Activated B cell treated with CpG ODN at 0.5 μM for 24 hours (primary cell): ENCODE measurements at regions of chr10 and their contacts with region 1.

Region 1: DNA sequence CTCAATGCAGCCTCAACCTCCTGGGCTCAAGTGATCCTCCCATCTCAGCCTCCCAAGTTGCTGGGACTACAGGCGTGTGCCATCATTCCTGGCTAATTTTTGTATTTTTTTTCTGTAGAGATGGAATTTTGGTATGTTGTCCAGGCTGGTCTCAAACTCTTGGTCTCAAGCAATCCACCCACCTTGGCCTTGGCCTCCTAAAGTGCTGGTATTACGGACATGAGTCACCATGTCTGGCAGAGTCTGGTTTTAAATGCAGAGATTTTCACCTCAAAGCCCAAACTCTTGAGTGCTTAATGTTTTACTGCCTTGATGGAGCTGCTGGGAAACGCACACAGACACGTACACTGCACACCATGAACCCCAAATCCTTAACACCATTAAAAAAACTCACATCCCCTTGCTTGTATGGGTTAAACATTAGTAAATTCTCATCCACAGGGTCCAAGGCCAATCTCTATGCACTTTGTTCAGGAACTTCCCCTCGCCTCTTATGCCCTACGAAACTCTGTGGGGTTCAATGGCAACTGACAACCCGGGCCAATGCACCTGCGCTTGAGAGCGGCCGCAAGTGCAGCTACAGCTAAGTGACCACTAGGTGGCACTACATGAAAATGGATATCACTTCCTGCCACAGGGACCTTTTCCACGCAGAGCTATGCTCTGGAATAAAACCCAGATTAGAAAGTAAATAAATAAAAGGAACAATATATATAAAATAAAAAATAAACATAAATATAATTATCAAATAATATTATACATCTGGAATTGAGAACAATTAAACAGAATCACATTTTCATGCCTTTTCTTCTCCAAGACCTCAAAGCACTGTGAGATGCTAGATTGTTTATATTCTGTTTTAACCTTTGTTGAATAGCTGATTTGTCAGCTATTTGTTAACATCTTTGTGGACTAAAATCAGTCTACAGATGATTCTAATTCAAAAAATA is 66.9 kb upstream of the AFAP1L2 start:
- DNase-seq: peak; percentile 22
- ATAC-seq: peak; percentile 93
- H3K4me3 Mint-ChIP-seq: no peak overlapping the region
- H3K27ac Mint-ChIP-seq: peak overlapping the region; percentile 53
- H3K4me1 Mint-ChIP-seq: peaks cover 17% of the 10 kb centered on the region
- H3K27me3 Mint-ChIP-seq: no peaks in the 10 kb centered on the region
- CTCF ChIP-seq: peak; percentile 51

Region 2: GRCh38 chr10:113982769-113983168 is 488.5 kb before region 1 on chr10:
- CTCF ChIA-PET with region 1: no interaction called
- POLR2A ChIA-PET with region 1: no interaction called
- intact Hi-C with region 1: no loop called
- DNase-seq: no peak
- ATAC-seq: no peak
- H3K4me3 Mint-ChIP-seq: no peak overlapping the region
- H3K27ac Mint-ChIP-seq: no peak overlapping the region
- H3K4me1 Mint-ChIP-seq: no peaks in the 10 kb centered on the region
- H3K27me3 Mint-ChIP-seq: no peaks in the 10 kb centered on the region
- CTCF ChIP-seq: no peak

Region 3: DNA sequence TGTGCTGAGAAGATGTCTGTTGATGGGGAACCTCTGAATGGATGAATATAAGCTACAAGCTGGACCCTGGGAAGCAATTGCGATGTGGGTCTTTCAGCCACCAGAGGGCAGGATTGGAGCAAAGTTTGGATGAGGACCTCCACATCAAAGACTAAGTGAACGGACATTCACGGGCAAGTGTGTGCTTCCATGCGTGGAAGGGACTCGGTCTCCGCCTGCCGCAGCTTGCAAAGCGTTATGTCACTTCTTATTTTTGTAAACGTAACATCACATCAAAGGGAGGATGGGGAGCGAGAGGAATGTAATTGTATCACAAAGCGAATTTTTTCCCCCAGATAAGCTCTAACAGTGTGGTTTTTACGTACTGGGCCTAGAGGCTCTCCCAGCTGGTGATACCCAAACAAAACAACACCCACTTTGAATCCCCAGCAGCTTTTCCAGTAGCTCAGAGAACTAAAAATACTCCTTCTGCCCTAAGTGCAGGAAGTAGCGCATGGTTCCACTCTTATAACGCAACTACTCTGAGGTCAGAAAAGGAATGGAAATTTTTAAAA is 167.1 kb before region 1 on chr10:
- CTCF ChIA-PET with region 1: interaction called, 15 read pairs
- POLR2A ChIA-PET with region 1: interaction called, 3 read pairs
- intact Hi-C with region 1: loop called (anchors 2 kb)
- DNase-seq: peak; percentile 46
- ATAC-seq: peak; percentile 53
- H3K4me3 Mint-ChIP-seq: peak overlapping the region; percentile 86
- H3K27ac Mint-ChIP-seq: peak overlapping the region; percentile 47
- H3K4me1 Mint-ChIP-seq: peaks cover 12% of the 10 kb centered on the region
- H3K27me3 Mint-ChIP-seq: no peaks in the 10 kb centered on the region
- CTCF ChIP-seq: peak; percentile 15

Region 4: GRCh38 chr10:114499630-114500190 is 28.5 kb after region 1 on chr10:
- CTCF ChIA-PET with region 1: interaction called, 18 read pairs
- POLR2A ChIA-PET with region 1: interaction called, 7 read pairs
- intact Hi-C with region 1: loop called (anchors 1 kb)
- DNase-seq: peak; percentile 37
- ATAC-seq: peak; percentile 49
- H3K4me3 Mint-ChIP-seq: peak overlapping the region; percentile 67
- H3K27ac Mint-ChIP-seq: peak overlapping the region; percentile 96
- H3K4me1 Mint-ChIP-seq: peaks cover 83% of the 10 kb centered on the region
- H3K27me3 Mint-ChIP-seq: no peaks in the 10 kb centered on the region
- CTCF ChIP-seq: no peak

Region 5: DNA sequence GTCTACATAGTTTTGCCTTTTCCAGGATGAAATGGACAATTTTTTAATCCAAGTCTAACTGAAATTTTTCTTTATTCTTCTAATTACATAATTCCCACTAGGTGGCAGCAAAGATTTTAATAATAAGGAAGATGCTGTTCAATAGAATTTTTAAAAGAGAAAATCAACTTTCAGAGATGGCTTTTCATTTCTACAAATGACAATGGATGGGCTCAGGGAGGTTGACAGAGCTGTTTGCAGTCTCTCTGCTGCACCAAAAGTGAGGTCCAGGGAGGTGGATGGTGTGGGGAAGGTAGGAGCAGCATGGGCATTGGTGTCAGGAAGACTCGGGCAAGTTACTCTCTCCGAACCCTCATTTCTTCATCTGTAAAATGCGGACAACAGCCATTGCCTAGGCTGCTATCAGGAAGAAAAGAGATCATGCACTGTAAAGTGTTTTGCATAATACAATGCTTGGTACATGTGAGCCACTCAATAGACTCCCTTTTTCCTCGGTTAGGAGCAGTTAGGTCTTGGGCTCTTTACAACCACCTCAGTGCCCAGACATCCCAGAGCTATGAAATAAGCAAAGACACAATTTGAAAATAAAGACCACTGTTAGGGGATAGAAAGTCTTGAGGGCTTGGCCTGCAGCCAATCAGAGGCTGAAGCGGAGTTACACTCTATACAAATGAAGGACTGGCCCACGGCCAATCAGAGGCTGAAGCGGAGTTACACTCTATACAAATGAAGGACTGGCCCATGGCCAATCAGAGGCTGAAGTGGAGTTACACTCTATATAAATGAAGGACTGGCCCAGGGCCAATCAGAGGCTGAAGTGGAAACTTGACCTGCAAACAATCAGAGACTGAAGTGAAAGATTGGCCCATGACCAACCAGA is 79.8 kb after region 1 on chr10:
- CTCF ChIA-PET with region 1: interaction called, 118 read pairs
- POLR2A ChIA-PET with region 1: no interaction called
- intact Hi-C with region 1: loop called (anchors 1 kb)
- DNase-seq: no peak
- ATAC-seq: no peak
- H3K4me3 Mint-ChIP-seq: no peak overlapping the region
- H3K27ac Mint-ChIP-seq: no peak overlapping the region
- H3K4me1 Mint-ChIP-seq: peaks cover 16% of the 10 kb centered on the region
- H3K27me3 Mint-ChIP-seq: no peaks in the 10 kb centered on the region
- CTCF ChIP-seq: no peak

Region 6: DNA sequence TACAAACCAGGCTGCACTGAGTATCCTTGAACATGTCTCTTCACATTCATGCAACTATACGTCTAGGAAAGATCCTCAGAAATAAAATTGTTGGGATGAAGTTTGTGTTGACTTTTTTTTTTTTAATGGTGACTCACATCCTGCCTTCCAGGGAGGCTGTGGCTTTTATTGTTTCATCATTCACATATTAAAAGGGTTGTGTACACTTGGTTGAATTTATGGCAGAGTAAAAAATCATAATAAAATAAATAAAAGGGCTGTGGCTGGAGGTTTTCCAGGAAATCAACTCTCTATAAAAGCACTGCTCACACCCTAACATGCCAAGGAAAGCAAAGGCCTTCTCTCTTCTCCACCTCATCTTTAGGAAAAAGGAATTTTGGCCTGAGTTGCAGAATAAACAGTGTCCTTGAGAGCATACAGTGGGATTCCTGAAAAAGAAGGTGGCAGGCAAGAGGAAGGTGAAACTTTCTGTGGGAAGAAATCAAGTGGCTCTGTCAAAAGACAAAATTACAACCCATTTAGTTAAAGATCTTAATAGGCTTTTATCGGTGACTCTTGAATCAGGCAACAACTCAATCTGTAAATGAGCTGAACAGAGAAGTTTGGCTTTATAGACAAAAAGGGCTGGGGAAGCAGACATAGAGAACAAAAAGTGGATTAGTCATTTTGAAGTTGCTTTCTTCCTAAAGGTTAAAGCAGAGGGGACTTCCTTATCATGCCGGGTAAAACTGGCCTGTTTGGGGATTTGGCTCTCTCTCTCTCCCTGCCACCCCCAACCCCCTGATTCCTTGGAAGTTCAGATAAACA is 308.8 kb after region 1 on chr10:
- CTCF ChIA-PET with region 1: interaction called, 25 read pairs
- POLR2A ChIA-PET with region 1: no interaction called
- intact Hi-C with region 1: no loop called
- DNase-seq: no peak
- ATAC-seq: no peak
- H3K4me3 Mint-ChIP-seq: no peak overlapping the region
- H3K27ac Mint-ChIP-seq: no peak overlapping the region
- H3K4me1 Mint-ChIP-seq: no peaks in the 10 kb centered on the region
- H3K27me3 Mint-ChIP-seq: no peaks in the 10 kb centered on the region
- CTCF ChIP-seq: no peak